HEK293 (cell line): ENCODE measurements at regions of chr22 and their contacts with region 1.

Region 1: DNA sequence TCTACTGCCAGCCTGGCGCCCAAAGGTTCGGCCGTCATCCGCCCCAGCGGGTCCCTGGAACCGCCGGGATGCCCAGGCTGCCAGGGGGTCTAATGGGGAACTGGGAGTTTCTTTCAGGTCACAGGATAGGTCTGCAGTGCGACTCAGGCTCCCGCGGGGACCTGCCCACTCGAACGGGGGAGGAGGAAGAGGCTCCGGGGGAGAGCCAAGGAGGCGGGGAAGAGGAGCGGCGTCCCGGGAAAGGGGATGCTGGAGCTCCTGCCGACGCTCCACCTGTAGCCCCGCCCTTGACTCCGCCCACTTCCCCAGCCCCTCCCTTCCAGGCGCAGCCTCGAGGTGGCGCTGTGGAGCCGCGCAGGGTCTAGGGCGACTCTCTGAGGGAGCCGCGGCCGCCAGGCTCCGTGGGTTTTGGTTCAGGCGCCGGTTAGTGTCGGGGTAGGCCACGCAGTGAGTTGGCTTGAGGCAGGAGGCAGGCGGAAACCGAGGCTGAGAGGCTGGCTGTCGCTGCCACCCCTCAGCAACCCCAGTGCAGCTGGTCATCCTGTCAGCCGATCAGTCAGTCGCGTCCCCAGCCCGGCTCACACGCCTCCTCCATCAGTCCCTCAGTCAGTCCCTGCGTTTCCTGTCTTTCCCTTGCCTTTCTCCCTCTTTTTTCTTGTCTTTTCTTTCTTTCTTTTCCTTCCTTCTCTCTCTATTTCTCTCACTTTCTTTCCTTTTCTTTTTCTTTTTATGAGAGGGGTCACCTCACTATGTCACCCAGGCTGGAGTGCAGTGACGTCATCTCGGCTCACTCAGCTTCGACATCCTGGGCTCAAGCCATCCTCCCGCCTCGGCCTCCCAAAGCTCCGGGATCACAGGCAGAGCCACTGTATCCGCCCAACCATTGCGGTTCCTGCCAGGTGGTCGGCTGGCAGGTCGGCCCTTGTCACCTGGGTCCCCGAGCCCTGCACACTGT is 26.4 kb downstream of the YWHAH start:
- H3K4me3 ChIP-seq: peak overlapping the region; percentile 47
- H3K27ac ChIP-seq: no peak overlapping the region
- H3K4me1 ChIP-seq: no peaks in the 10 kb centered on the region
- CTCF ChIP-seq: peak; percentile 97

Region 2: DNA sequence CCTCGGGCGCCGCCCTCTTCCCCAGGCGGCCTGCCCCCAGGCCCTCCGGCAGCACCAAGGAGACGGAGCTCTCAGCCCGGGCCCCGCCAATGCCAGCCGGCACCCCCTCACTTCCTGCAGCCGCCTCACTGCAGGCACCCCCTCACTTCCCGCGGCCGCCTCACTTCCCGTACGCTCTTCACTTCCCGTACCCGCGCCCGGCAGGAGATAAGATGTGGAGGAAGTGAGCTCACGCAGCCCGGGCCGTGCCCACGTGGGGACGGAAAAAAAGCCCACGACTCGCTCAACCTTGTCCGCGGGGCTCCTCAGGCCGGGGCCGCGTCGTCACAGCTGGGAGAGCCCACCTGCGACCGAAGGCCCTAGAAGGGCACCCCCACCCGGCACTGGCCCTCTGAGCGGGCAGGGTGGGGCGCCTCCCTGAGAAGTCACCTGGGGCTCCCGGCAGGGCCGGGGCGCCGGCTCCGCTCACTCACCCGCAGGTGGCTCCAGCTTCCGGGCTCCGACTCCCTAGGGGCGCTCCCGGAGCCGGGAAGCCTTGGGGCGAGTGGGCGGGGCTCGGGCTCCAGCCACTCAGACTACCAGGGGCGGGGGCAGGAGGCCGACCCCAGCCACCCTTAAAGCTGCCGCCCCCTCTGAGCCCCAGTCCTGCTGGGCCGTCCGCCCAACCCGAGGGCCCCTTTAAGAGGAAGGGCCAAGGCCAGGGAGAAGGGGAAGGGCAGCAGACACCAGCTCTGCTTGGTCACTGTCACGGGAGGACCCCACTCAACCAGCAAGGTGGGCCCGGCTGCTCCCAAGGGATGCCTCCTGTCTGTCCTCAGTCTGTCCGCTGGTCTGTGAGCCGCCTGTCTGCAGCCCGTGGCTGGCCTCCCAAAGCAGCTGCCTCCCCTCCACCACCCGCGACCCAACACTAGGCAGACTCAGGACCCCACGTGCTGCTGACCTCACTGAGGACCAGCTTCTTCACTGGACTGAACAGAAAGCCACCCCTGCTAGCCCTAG is 340.1 kb before region 1 on chr22:
- CTCF ChIA-PET with region 1: interaction called, 10 read pairs
- POLR2A ChIA-PET with region 1: interaction called, 3 read pairs
- H3K4me3 ChIP-seq: peak overlapping the region; percentile 73
- H3K27ac ChIP-seq: peak overlapping the region; percentile 80
- H3K4me1 ChIP-seq: peaks cover 2% of the 10 kb centered on the region; the same call in 1 of the 2 replicates
- CTCF ChIP-seq: no peak; the same call in 1 of the 2 replicates

Region 3: DNA sequence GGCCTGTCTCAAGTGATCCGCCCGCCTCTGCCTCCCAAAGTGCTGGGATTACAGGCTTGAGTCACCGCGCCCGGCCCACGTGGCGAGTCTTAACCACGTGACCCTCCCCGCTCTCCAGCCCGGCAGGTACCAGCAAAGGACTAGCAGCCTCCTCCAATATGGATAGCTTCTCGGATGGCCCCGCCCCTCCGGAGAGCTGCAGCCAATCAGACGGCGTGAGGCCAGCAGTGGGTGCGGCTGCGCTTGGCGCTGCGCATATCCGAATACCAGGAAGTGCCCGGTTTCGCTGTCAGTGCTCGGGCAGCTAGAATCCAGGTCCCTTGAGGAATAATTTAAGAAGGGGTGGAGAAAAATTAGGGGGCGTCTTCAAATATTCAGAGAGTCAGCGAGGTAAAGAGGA is 294.1 kb before region 1 on chr22:
- CTCF ChIA-PET with region 1: interaction called, 16 read pairs
- POLR2A ChIA-PET with region 1: interaction called, 4 read pairs
- H3K4me3 ChIP-seq: peak overlapping the region; percentile 26
- H3K27ac ChIP-seq: no peak overlapping the region
- H3K4me1 ChIP-seq: no peaks in the 10 kb centered on the region; the same call in 1 of the 2 replicates
- CTCF ChIP-seq: no peak

Region 4: GRCh38 chr22:31891366-31892079 is 79.2 kb before region 1 on chr22:
- CTCF ChIA-PET with region 1: no interaction called
- POLR2A ChIA-PET with region 1: no interaction called
- H3K4me3 ChIP-seq: no peak overlapping the region
- H3K27ac ChIP-seq: no peak overlapping the region
- H3K4me1 ChIP-seq: no peaks in the 10 kb centered on the region; the same call in 1 of the 2 replicates
- CTCF ChIP-seq: no peak

Region 5: DNA sequence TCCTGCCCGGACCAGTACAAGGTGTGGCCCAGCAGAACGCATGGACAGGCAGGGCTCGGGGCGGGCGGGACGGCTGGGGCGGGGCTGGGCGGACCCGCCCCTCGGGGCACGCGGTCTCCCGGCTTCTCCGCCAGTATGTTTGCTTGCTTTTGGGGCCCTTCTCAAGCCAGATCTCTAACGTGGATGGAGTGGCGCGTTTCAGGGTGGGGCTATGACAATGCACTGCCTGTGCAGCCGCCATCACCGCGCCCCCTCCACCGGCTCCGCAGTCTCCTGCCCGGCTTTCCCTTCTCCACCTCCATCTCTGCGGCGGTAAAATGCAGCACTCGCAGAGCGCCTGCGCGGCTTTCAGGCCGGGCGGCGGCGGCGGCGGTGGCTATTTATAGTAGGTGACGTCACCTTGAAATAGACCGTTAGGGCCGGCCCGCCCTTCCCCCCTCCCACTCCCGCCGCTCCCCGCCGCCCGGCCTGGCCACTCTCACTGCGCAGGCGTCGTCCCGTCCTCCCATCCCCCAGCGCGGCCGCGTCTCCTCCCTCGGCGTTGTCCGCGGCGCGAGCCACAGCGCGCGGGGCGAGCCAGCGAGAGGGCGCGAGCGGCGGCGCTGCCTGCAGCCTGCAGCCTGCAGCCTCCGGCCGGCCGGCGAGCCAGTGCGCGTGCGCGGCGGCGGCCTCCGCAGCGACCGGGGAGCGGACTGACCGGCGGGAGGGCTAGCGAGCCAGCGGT is 26.6 kb before region 1 on chr22 and contains the start of gene YWHAH:
- CTCF ChIA-PET with region 1: interaction called, 25 read pairs
- POLR2A ChIA-PET with region 1: interaction called, 6 read pairs
- H3K4me3 ChIP-seq: peak within 1 kb of the TSS; percentile 83
- H3K27ac ChIP-seq: peak within 1 kb of the TSS; percentile 99
- H3K4me1 ChIP-seq: peaks cover 12% of the 10 kb centered on the region; the same call in 1 of the 2 replicates
- CTCF ChIP-seq: no peak

Region 6: GRCh38 chr22:31958625-31959239 is 12.0 kb before region 1 on chr22:
- CTCF ChIA-PET with region 1: interaction called, 50 read pairs
- POLR2A ChIA-PET with region 1: interaction called, 3 read pairs
- H3K4me3 ChIP-seq: no peak overlapping the region
- H3K27ac ChIP-seq: no peak overlapping the region
- H3K4me1 ChIP-seq: no peaks in the 10 kb centered on the region; the same call in none of the 2 replicates
- CTCF ChIP-seq: no peak

Region 7: GRCh38 chr22:32123657-32124056 is 152.9 kb after region 1 on chr22:
- CTCF ChIA-PET with region 1: interaction called, 11 read pairs
- POLR2A ChIA-PET with region 1: no interaction called
- H3K4me3 ChIP-seq: no peak overlapping the region
- H3K27ac ChIP-seq: no peak overlapping the region
- H3K4me1 ChIP-seq: no peaks in the 10 kb centered on the region
- CTCF ChIP-seq: 0 out of 2 replicates have a peak, but pooled peaks have one; percentile 11